ENCODE measurements at regions of chr14 and their contacts with region 1.

Region 1: DNA sequence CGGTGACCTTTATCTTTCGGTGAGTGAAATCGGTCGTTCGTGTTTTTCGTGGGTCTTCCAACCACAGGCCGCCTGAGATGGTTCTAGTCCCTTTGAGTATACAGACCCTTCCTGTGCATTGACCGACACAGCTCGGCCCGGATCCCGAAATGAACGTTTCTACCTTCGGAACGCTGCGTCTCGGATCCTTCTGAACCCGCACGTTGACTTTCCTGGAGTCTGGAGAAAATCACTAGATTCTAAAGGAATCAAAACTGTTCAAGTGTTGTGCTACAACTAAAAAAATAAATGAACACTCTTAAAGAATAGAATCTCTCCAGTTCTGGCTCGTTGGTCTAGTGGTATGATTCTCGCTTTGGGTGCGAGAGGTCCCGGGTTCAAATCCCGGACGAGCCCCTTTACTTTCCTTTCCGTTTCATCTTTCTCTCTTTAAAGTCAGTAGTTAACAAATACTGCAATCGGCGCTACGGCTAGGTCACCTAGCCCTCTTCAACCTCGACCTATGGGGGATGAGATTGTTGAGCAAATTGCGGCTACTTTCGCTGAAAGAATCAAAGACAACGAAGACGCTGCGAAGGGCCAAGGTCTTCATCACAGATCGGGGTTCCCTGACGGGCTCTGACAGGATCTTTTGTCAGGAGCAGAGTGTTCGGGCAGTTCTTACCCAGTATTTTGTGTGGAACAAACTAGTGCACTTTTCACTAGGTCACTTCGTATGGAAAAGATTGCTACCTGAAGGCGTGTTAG is 8.6 kb downstream of the OR6S1 start:
- DNase-seq: peak; percentile 96 to 97
- ATAC-seq: peak; percentile 85 to 88
- H3K4me3 ChIP-seq: peak overlapping the region; percentile 62
- H3K27ac ChIP-seq: peak overlapping the region; percentile 1 to 61; a peak in 3 of 6 replicates
- H3K4me1 ChIP-seq: peaks cover 21% of the 10 kb centered on the region; the same call in 2 of the 3 replicates
- CTCF ChIP-seq: no peak
- EP300 ChIP-seq: no peak
- POLR2A ChIP-seq: no peak
- RAD21 ChIP-seq: no peak

Region 2: GRCh38 chr14:20652996-20653975 is 20.4 kb after region 1 on chr14:
- CTCF ChIA-PET with region 1: interaction called, 11 read pairs
- POLR2A ChIA-PET with region 1: no interaction called
- DNase-seq: peak; percentile 64 to 97
- ATAC-seq: peak; percentile 75 to 83
- H3K4me3 ChIP-seq: peak overlapping the region; percentile 75
- H3K27ac ChIP-seq: peak overlapping the region; percentile 25 to 65; a peak in 3 of 6 replicates
- H3K4me1 ChIP-seq: peaks cover 26% of the 10 kb centered on the region; the same call in 2 of the 3 replicates
- CTCF ChIP-seq: no peak
- EP300 ChIP-seq: no peak
- POLR2A ChIP-seq: no peak
- RAD21 ChIP-seq: no peak; a peak in 1 of 5 replicates

Region 3: DNA sequence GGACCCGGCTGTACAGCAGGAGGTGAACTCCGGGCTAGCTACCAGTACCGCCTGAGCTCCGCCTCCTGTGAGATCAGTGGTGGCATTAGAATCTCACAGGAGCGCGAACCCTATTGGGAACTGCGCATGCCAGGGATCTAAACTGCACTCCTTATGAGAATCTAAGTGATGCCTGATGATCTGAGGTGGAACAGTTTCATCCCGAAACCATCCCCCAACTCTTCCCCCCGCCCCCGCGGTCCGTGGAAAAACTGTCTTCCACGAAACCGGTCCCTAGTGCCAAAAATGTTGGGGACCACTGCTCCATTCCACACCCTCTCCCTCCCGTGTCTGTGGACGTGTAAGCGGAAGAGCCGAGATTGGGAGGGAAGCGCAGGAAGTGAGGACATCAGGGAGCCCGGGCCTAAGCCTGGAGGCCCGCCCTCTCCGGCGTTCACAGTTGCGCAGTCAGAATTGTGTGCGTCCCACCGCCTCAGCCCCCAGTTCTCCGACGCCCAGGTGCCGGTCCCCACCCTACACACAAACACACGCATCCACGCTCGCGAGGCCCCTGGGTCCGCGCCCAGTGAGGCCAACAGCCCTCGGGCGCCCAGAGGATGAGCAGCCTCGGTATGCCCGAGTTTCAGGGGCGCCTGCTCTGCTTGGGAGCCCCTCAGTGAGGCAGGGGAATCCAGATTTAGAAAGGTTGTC is 49.7 kb after region 1 on chr14:
- CTCF ChIA-PET with region 1: interaction called, 10 read pairs
- POLR2A ChIA-PET with region 1: interaction called, 22 read pairs
- DNase-seq: peak; percentile 81 to 96
- ATAC-seq: peak; percentile 67 to 77
- H3K4me3 ChIP-seq: peak overlapping the region; percentile 58
- H3K27ac ChIP-seq: peak overlapping the region; percentile 95
- H3K4me1 ChIP-seq: peaks cover 33% of the 10 kb centered on the region
- CTCF ChIP-seq: no peak
- EP300 ChIP-seq: no peak
- POLR2A ChIP-seq: peak; percentile 80
- RAD21 ChIP-seq: no peak

Region 4: GRCh38 chr14:20690848-20691523 is 58.1 kb after region 1 on chr14:
- CTCF ChIA-PET with region 1: interaction called, 10 read pairs
- POLR2A ChIA-PET with region 1: interaction called, 6 read pairs
- DNase-seq: peak; percentile 71 to 81
- ATAC-seq: peak; percentile 82 to 84
- H3K4me3 ChIP-seq: peak overlapping the region; percentile 5; the same call in 1 of the 3 replicates
- H3K27ac ChIP-seq: peak overlapping the region; percentile 2 to 26; a peak in 1 of 6 replicates
- H3K4me1 ChIP-seq: peaks cover 34% of the 10 kb centered on the region
- CTCF ChIP-seq: peak; percentile 88
- EP300 ChIP-seq: no peak
- POLR2A ChIP-seq: no peak
- RAD21 ChIP-seq: peak; percentile 88 to 92

Measured in A549 (cell line).